GM10248 (cell line): ENCODE measurements at regions of chr1 and their contacts with region 1.

Region 1: GRCh38 chr1:35726450-35727433 is 8.1 kb upstream of the C1orf216 start:
- DNase-seq: peak; percentile 63
- CTCF ChIP-seq: peak; percentile 83

Region 2: GRCh38 chr1:35577071-35577998 is 149.4 kb before region 1 on chr1:
- CTCF ChIA-PET with region 1: interaction called, 45 read pairs
- POLR2A ChIA-PET with region 1: no interaction called
- DNase-seq: peak; percentile 69
- CTCF ChIP-seq: no peak

Region 3: GRCh38 chr1:35747938-35748702 is 21.4 kb after region 1 on chr1:
- CTCF ChIA-PET with region 1: interaction called, 32 read pairs
- POLR2A ChIA-PET with region 1: no interaction called
- DNase-seq: no peak
- CTCF ChIP-seq: no peak

Region 4: GRCh38 chr1:35769188-35769758 is 42.5 kb after region 1 on chr1:
- CTCF ChIA-PET with region 1: interaction called, 35 read pairs
- POLR2A ChIA-PET with region 1: no interaction called
- DNase-seq: peak; percentile 94
- CTCF ChIP-seq: no peak

Region 5: DNA sequence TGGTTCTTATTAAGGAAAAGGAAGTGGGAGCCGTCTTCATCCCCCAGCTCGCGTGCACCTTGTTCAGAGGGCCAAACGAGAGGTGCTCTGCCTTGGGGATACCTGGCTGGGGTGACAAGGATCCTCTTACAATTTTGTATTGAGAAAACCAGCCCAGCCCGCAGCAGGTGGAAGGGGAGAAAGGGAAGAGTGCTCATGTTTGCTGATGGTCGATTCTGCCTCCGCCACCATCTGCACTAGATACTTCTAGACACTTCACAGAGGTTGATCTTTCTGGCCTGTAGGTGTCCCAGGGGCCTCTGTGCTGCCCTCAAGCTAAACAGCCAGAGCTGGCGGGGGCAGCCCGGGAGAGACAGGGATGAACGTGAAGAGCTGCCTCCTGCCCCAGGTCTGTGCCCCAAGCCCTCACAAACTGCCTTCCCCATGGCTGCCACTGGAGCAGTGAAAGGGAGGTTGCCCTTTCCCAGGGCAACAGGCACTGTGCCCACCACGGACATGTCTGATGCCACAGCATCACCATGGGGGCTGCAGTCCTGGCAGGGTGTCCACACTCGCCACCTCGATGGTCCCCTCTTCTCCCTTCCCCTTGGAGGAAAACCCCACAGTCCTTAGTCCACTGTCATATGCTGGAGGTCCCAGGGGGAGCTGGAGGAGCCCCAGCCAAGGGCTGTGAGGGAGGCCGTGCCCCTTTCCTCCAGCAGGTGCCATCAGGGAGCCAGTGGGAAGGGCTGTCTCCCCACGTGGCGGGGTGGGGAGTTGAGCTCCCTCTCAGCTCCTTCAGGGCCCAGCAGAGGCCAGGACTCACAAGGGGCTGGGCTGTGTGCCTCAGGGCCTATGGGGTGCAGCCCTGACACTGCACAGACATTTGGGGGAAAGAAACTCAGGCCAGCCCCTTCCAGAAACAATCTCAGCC is 370.0 kb after region 1 on chr1:
- CTCF ChIA-PET with region 1: no interaction called
- POLR2A ChIA-PET with region 1: no interaction called
- DNase-seq: no peak
- CTCF ChIP-seq: peak; percentile 10